CD14-positive monocyte (primary cell): ENCODE measurements at regions of chr16 and their contacts with region 1.

Region 1: DNA sequence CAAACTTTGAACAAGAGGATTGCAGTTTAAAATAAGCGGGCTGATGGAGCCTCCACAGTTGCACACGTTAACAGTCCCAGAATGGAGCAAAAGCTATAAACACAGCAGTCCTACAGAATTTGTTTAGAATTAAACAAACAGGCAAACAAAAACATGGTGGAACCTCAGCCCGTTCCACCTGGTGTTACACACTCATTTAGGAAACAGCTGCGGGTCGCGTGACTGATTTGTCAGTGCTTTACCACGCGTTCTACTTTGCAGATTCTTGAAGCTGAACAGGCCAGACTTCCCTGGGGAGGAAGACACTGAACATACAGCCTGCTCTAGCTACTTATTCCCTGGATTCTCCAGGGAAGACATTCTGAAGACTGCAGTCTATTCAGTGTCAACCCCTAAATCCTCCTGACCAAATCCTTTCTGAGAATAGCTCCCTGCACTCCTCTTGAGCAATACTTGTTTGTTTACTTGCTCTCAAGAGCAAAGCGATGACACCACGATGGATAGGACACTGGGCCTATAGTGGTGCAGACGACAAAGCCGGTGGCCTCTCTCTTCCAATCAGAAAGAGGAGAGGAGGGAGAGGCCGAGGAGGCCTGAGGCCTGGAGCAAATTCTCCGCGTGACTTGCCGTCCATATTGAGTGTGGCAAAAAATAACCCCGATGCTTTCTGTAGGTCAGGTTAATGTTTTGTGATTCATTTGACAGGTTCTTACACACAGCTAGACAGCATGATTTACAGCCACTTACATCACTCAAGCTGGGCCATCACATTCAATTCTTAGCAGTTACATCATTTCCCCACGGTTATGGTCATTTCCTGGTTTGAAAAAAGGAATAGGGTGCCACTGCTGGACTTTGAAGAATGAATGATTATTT is 4.0 kb upstream of the MAP1LC3B start:
- DNase-seq: peak; percentile 98 to 99 (median 98)
- H3K4me3 ChIP-seq: peak overlapping the region in 2 of 3 experiments; percentile 2 to 54
- H3K4me3 Mint-ChIP-seq: peak overlapping the region; percentile 57 to 71
- H3K27ac ChIP-seq: peak overlapping the region; percentile 79 to 98
- H3K27ac Mint-ChIP-seq: peak overlapping the region; percentile 94 to 99 (median 98)
- H3K4me1 ChIP-seq: peaks cover 39 to 56% of the 10 kb centered on the region in 2 donors
- H3K4me1 Mint-ChIP-seq: peaks cover 32% of the 10 kb centered on the region
- H3K27me3 ChIP-seq: no peaks in the 10 kb centered on the region
- H3K27me3 Mint-ChIP-seq: peaks cover 0 to 4% (median 3%) of the 10 kb centered on the region in 3 donors
- CTCF ChIP-seq: no peak

Region 2: DNA sequence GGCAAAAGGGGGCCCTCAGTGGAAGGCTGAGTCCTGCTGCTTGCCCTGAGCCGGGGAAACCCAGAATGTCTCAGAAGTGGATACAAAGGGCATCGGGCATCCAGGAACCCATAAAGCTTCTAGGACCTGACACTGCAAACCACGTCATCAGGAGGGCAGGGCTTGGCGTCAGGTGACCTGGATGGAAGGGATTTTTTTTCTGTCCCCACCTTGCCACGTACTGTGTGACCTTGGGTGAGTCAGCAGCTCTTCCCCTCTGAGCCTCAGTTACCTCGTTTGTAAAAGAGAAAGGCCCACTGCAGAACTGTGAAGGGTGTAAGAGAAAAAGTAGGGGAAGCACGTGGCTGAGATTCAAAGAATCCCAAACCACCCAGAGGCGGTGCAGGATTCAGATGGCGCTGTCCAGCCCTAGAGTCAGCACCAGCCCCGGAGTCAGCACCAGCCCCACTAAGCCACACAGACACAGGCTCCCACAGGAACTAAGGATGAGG is 124.7 kb before region 1 on chr16:
- intact Hi-C with region 1: no loop called
- DNase-seq: no peak
- H3K4me3 ChIP-seq: no peak overlapping the region
- H3K4me3 Mint-ChIP-seq: no peak overlapping the region
- H3K27ac ChIP-seq: no peak overlapping the region
- H3K27ac Mint-ChIP-seq: no peak overlapping the region
- H3K4me1 ChIP-seq: no peaks in the 10 kb centered on the region
- H3K4me1 Mint-ChIP-seq: peaks cover 2% of the 10 kb centered on the region
- H3K27me3 ChIP-seq: no peaks in the 10 kb centered on the region
- H3K27me3 Mint-ChIP-seq: peaks cover 0 to 10% (median 3%) of the 10 kb centered on the region in 3 donors
- CTCF ChIP-seq: no peak

Region 3: GRCh38 chr16:87316923-87317749 is 71.0 kb before region 1 on chr16 and contains the start of gene C16orf95:
- intact Hi-C with region 1: loop called (anchors 5 kb)
- DNase-seq: peak; percentile 89 to 94 (median 92)
- H3K4me3 ChIP-seq: peak within 1 kb of the TSS; percentile 71 to 85 (median 81)
- H3K4me3 Mint-ChIP-seq: peak within 1 kb of the TSS; percentile 98 to 99
- H3K27ac ChIP-seq: peak within 1 kb of the TSS; percentile 80 to 91
- H3K27ac Mint-ChIP-seq: peak within 1 kb of the TSS; percentile 88 to 96 (median 93)
- H3K4me1 ChIP-seq: peaks cover 7 to 11% of the 10 kb centered on the region in 2 donors
- H3K4me1 Mint-ChIP-seq: peaks cover 11% of the 10 kb centered on the region
- H3K27me3 ChIP-seq: no peaks in the 10 kb centered on the region
- H3K27me3 Mint-ChIP-seq: peaks cover 0 to 5% (median 0%) of the 10 kb centered on the region in 3 donors
- CTCF ChIP-seq: peak; percentile 72
- polyA plus RNA-seq, gene C16orf95: 0.89 to 1.9 (median 1.7) TPM

Region 4: DNA sequence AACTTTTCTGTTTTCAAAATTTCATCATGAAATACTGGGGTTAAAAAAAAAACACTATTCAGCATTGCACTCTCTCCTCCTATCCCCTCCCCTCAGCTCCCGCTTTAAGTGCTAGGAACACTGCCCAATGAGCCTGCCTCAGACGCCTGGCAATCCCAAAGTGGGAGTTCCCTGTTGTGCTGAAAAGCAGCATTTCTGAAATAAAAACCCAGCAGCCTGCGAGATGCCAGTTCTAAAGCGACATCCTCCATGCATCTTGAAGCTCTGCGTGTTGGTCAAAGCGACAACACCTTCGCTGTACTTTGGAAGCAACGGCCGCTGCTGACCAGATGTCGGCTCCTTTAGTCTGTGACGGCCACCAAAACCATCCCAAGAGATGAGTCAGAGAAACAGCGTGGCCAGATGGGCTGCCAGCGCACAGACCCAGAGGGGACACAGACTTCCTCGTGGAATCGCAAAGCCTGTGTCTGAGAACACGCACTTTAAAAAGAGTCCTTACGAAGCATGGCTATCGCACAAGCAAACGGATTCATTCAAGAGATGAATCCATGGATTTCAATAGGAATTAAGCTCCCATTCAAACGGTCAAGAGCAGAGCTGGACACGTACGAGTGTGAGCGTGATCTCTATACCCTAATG is 37.4 kb before region 1 on chr16:
- intact Hi-C with region 1: no loop called
- DNase-seq: no peak
- H3K4me3 ChIP-seq: no peak overlapping the region
- H3K4me3 Mint-ChIP-seq: no peak overlapping the region
- H3K27ac ChIP-seq: no peak overlapping the region
- H3K27ac Mint-ChIP-seq: no peak overlapping the region
- H3K4me1 ChIP-seq: no peaks in the 10 kb centered on the region
- H3K4me1 Mint-ChIP-seq: no peaks in the 10 kb centered on the region
- H3K27me3 ChIP-seq: no peaks in the 10 kb centered on the region
- H3K27me3 Mint-ChIP-seq: peaks cover 0 to 12% (median 0%) of the 10 kb centered on the region in 3 donors
- CTCF ChIP-seq: no peak

Region 5: GRCh38 chr16:87492721-87493607 is 104.8 kb after region 1 on chr16 and contains the start of gene ZCCHC14:
- intact Hi-C with region 1: loop called in 1 of 2 experiments (anchors 2 kb)
- DNase-seq: peak; percentile 95 to 97 (median 97)
- H3K4me3 ChIP-seq: peak within 1 kb of the TSS; percentile 23 to 73 (median 36)
- H3K4me3 Mint-ChIP-seq: peak within 1 kb of the TSS; percentile 80 to 91
- H3K27ac ChIP-seq: no peak within 1 kb of the TSS
- H3K27ac Mint-ChIP-seq: peak within 1 kb of the TSS in 4 of 7 donors; percentile 7 to 79 (median 50)
- H3K4me1 ChIP-seq: peaks cover 23 to 28% of the 10 kb centered on the region in 2 donors
- H3K4me1 Mint-ChIP-seq: peaks cover 54% of the 10 kb centered on the region
- H3K27me3 ChIP-seq: peaks cover 0 to 44% of the 10 kb centered on the region in 2 donors
- H3K27me3 Mint-ChIP-seq: peaks cover 34 to 68% (median 61%) of the 10 kb centered on the region in 3 donors
- CTCF ChIP-seq: no peak
- polyA plus RNA-seq, gene ZCCHC14: 0.11 to 4.0 (median 0.22) TPM